ENCODE measurements at regions of chr14 and their contacts with region 1.

Region 1: GRCh38 chr14:90288651-90289355 is 32.5 kb downstream of the PSMC1 start:
- DNase-seq: no peak
- H3K4me3 ChIP-seq: no peak overlapping the region
- H3K27ac ChIP-seq: no peak overlapping the region
- H3K4me1 ChIP-seq: peaks cover 0 to 8% (median 0%) of the 10 kb centered on the region in 4 experiments; a peak in 3 of 7 replicates
- H3K27me3 ChIP-seq: no peaks in the 10 kb centered on the region
- CTCF ChIP-seq: no peak
- EP300 ChIP-seq: no peak
- POLR2A ChIP-seq: no peak
- RAD21 ChIP-seq: no peak

Region 2: GRCh38 chr14:90274808-90275457 is 13.9 kb before region 1 on chr14:
- CTCF ChIA-PET with region 1: interaction called, 34 read pairs
- POLR2A ChIA-PET with region 1: no interaction called
- DNase-seq: no peak
- H3K4me3 ChIP-seq: no peak overlapping the region
- H3K27ac ChIP-seq: no peak overlapping the region
- H3K4me1 ChIP-seq: no peaks in the 10 kb centered on the region
- H3K27me3 ChIP-seq: no peaks in the 10 kb centered on the region
- CTCF ChIP-seq: no peak
- EP300 ChIP-seq: no peak
- POLR2A ChIP-seq: no peak
- RAD21 ChIP-seq: no peak

Region 3: GRCh38 chr14:90301668-90302090 is 12.9 kb after region 1 on chr14:
- CTCF ChIA-PET with region 1: interaction called, 23 read pairs
- POLR2A ChIA-PET with region 1: interaction called, 3 read pairs
- DNase-seq: no peak
- H3K4me3 ChIP-seq: no peak overlapping the region
- H3K27ac ChIP-seq: no peak overlapping the region
- H3K4me1 ChIP-seq: peaks cover 5 to 21% (median 16%) of the 10 kb centered on the region in 4 experiments; a peak in 6 of 7 replicates
- H3K27me3 ChIP-seq: no peaks in the 10 kb centered on the region
- CTCF ChIP-seq: peak in 2 of 3 experiments; percentile 34 to 36; a peak in 2 of 4 replicates
- EP300 ChIP-seq: no peak
- POLR2A ChIP-seq: no peak
- RAD21 ChIP-seq: peak; percentile 74 to 78

Region 4: DNA sequence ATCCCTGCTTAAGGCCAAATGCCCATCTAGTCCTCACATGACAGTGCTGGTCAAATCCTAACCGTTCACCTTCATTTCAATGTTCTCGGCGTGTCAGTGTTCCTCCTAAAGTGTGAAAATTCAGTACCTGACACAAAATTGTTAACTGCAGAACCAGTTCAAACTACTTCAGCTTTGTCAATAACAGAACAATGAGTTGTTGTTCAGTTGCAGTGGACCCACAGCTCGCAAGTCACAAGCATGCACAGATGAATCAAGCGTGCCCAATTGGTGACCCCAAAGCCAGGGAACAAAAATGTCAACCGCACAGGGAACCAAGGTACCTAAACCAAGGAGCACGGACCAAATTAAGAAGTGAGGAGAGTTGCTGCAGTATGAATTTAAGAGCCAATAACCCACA is 19.8 kb after region 1 on chr14:
- CTCF ChIA-PET with region 1: interaction called, 14 read pairs
- POLR2A ChIA-PET with region 1: interaction called, 3 read pairs
- DNase-seq: no peak
- H3K4me3 ChIP-seq: no peak overlapping the region
- H3K27ac ChIP-seq: no peak overlapping the region
- H3K4me1 ChIP-seq: peaks cover 0 to 8% (median 3%) of the 10 kb centered on the region in 4 experiments; a peak in 5 of 7 replicates
- H3K27me3 ChIP-seq: peaks cover 0 to 1% (median 0%) of the 10 kb centered on the region in 4 experiments; a peak in 1 of 7 replicates
- CTCF ChIP-seq: no peak
- EP300 ChIP-seq: no peak
- POLR2A ChIP-seq: no peak
- RAD21 ChIP-seq: no peak

Region 5: GRCh38 chr14:90336982-90337381 is 48.2 kb after region 1 on chr14:
- CTCF ChIA-PET with region 1: no interaction called
- POLR2A ChIA-PET with region 1: no interaction called
- DNase-seq: no peak
- H3K4me3 ChIP-seq: no peak overlapping the region
- H3K27ac ChIP-seq: no peak overlapping the region
- H3K4me1 ChIP-seq: no peaks in the 10 kb centered on the region; a peak in 1 of 7 replicates
- H3K27me3 ChIP-seq: peaks cover 0 to 5% (median 0%) of the 10 kb centered on the region in 4 experiments; a peak in 3 of 7 replicates
- CTCF ChIP-seq: no peak
- EP300 ChIP-seq: no peak
- POLR2A ChIP-seq: no peak
- RAD21 ChIP-seq: no peak

Region 6: GRCh38 chr14:90399541-90400444 is 111.0 kb after region 1 on chr14:
- CTCF ChIA-PET with region 1: interaction called, 5 read pairs
- POLR2A ChIA-PET with region 1: interaction called, 14 read pairs
- DNase-seq: peak; percentile 68 to 83
- H3K4me3 ChIP-seq: peak overlapping the region in 1 of 4 experiments; percentile 88; a peak in 2 of 8 replicates
- H3K27ac ChIP-seq: no peak overlapping the region
- H3K4me1 ChIP-seq: peaks cover 0 to 3% (median 1%) of the 10 kb centered on the region in 4 experiments; a peak in 2 of 7 replicates
- H3K27me3 ChIP-seq: no peaks in the 10 kb centered on the region
- CTCF ChIP-seq: peak; percentile 99 to 100 (median 100)
- EP300 ChIP-seq: peak in 1 of 2 experiments; percentile 54; a peak in 1 of 3 replicates
- POLR2A ChIP-seq: no peak
- RAD21 ChIP-seq: peak; percentile 96